GM12878 (cell line): ENCODE measurements at regions of chr1 and their contacts with region 1.

Region 1: DNA sequence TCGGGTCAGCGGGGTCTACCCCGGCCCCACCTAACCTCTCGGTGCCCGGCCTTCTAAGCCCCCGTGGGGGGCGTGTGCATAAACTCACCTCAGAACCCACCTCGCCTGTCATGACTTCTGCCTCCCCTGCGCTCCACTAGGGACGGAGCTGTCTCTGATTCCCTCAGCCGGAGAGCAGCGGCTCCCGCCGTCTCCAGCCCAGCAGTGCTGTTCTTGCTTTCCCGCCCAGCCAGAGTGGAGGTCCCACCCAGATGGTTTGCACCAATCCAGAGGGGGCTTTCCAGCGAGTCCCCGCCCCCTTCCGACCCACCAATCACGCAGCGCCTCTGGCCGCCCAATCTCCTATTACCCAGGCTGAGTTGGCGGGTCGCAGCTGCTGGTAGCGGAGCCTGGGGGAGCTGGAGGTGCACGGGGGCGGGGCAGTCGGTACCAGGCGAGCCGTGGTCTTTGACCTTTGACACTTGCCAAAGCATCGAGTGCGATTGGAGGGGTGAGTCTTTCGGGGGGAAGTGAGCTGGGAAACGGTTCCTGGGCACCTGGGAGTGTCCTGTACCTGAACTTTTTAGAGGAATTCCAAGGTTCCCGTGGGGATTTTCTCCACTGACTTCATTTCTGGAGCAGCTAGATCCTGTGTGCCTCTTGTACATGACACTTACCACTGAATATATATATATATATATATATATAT is at the start of gene CLSPN:
- DNase-seq: peak; percentile 86
- ATAC-seq: peak; percentile 95
- H3K4me3 ChIP-seq: peak within 1 kb of the TSS; percentile 78
- H3K27ac ChIP-seq: peak within 1 kb of the TSS; percentile 91
- H3K4me1 ChIP-seq: no peaks in the 10 kb centered on the region
- H3K27me3 ChIP-seq: no peaks in the 10 kb centered on the region
- CTCF ChIP-seq: no peak
- EP300 ChIP-seq: no peak
- POLR2A ChIP-seq: peak; percentile 91
- RAD21 ChIP-seq: no peak
- polyA plus RNA-seq, gene CLSPN: 13.9 to 16.6 TPM

Region 2: GRCh38 chr1:35641233-35641866 is 128.6 kb before region 1 on chr1 and contains the start of gene PSMB2:
- CTCF ChIA-PET with region 1: interaction called, 3 read pairs
- POLR2A ChIA-PET with region 1: interaction called, 3 read pairs
- RAD21 ChIA-PET with region 1: no interaction called
- SMC1A ChIA-PET with region 1: interaction called, 6 read pairs
- in situ Hi-C with region 1: no loop called
- intact Hi-C with region 1: loop called (anchors 5 kb)
- DNase-seq: peak; percentile 80
- ATAC-seq: peak; percentile 91
- H3K4me3 ChIP-seq: peak within 1 kb of the TSS; percentile 98
- H3K27ac ChIP-seq: peak within 1 kb of the TSS; percentile 82
- H3K4me1 ChIP-seq: no peaks in the 10 kb centered on the region; the same call in 1 of the 2 replicates
- H3K27me3 ChIP-seq: no peaks in the 10 kb centered on the region; a peak in 3 of 4 replicates
- CTCF ChIP-seq: no peak
- EP300 ChIP-seq: no peak
- POLR2A ChIP-seq: peak; percentile 98
- RAD21 ChIP-seq: no peak
- polyA plus RNA-seq, gene PSMB2: 289 to 299 TPM

Region 3: DNA sequence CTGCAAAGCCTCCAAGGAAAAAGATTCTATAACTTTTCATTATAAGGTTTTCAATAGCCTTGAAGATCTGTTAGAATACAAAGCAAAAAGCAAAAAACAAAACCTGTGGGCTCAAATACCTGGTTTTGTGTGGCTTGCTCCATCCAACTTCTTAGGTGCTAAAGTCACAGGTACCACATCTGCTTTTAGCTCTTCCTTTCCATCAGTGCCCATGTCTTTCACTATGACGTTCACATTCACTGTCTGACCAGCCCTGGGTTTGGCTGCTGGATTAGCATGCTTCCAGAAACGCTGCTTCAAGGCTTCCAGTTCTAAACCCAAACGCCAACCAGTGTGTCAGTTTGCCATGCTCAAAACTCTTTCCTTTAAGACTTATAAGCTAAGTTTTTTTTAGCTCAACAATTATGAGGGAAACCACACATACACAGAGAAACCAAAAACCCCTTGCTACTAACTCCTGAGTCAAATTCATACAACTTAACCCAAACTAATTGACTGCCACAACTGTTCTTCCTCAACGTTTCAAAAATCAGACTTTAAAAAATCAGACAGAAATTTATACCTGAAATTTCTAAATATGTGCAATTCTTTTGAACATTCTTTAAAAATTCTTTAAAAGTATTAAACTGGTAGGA is 16.2 kb before region 1 on chr1:
- CTCF ChIA-PET with region 1: interaction called, 44 read pairs
- POLR2A ChIA-PET with region 1: interaction called, 70 read pairs
- RAD21 ChIA-PET with region 1: interaction called, 10 read pairs
- SMC1A ChIA-PET with region 1: interaction called, 42 read pairs
- in situ Hi-C with region 1: no loop called
- intact Hi-C with region 1: no loop called
- DNase-seq: no peak
- ATAC-seq: peak; percentile 78
- H3K4me3 ChIP-seq: no peak overlapping the region
- H3K27ac ChIP-seq: no peak overlapping the region
- H3K4me1 ChIP-seq: peaks cover 13% of the 10 kb centered on the region
- H3K27me3 ChIP-seq: no peaks in the 10 kb centered on the region
- CTCF ChIP-seq: no peak
- EP300 ChIP-seq: no peak
- POLR2A ChIP-seq: no peak
- RAD21 ChIP-seq: no peak